Ovary (tissue), 10 donors: ENCODE measurements at regions of chr1 and their contacts with region 1.

Region 1: GRCh38 chr1:179809506-179810366 is 66.6 kb downstream of the FAM163A start:
- DNase-seq: peak; percentile 43 to 73 (median 61)
- H3K4me3 ChIP-seq: no peak overlapping the region
- H3K27ac ChIP-seq: no peak overlapping the region
- H3K4me1 ChIP-seq: peaks cover 8% of the 10 kb centered on the region
- H3K27me3 ChIP-seq: no peaks in the 10 kb centered on the region
- CTCF ChIP-seq: peak; percentile 78 to 82 (median 79)
- EP300 ChIP-seq: no peak
- POLR2A ChIP-seq: no peak

Region 2: DNA sequence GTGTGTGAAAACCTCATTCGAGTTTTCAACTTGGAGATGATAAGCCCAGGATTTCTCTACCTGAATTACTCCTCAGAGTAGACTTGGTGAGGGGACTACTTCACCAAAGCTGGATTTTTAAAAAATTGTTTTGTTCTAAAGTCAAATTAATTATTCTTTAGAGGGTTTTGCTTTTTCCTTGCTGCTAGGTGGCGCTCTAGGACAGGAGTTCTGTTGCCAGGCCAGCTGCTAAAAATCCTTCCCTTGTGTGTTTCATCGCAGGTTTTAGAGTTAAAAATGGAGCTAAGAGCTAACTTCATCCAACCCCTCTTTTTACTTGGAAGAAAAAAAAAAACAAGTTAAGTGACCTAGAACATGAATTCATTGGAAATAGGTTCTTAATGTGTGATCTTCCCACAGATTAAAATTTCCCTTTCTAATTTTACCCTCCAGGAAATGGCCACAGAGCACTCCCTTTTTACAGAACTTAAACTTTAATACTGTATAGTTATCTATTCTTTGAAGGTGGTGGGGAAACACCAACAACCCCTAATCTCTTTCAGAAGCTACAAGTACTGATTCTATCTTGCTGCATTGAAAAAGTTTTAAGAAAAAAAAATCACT is 103.3 kb before region 1 on chr1:
- intact Hi-C with region 1: loop called (anchors 2 to 5 kb)
- DNase-seq: peak; percentile 52 to 69 (median 60)
- H3K4me3 ChIP-seq: no peak overlapping the region
- H3K27ac ChIP-seq: no peak overlapping the region
- H3K4me1 ChIP-seq: no peaks in the 10 kb centered on the region
- H3K27me3 ChIP-seq: no peaks in the 10 kb centered on the region
- CTCF ChIP-seq: peak; percentile 22 to 76 (median 61)
- EP300 ChIP-seq: no peak
- POLR2A ChIP-seq: no peak

Region 3: GRCh38 chr1:179867807-179868330 is 58.1 kb after region 1 on chr1:
- intact Hi-C with region 1: no loop called
- DNase-seq: peak in 4 of 5 donors; percentile 28 to 59 (median 48)
- H3K4me3 ChIP-seq: no peak overlapping the region
- H3K27ac ChIP-seq: no peak overlapping the region
- H3K4me1 ChIP-seq: no peaks in the 10 kb centered on the region
- H3K27me3 ChIP-seq: no peaks in the 10 kb centered on the region
- CTCF ChIP-seq: peak in 1 of 3 donors; percentile 42
- EP300 ChIP-seq: no peak
- POLR2A ChIP-seq: no peak